Head of caudate nucleus (tissue), 42 donors: ENCODE measurements at regions of chr20 and their contacts with region 1.

Region 1: DNA sequence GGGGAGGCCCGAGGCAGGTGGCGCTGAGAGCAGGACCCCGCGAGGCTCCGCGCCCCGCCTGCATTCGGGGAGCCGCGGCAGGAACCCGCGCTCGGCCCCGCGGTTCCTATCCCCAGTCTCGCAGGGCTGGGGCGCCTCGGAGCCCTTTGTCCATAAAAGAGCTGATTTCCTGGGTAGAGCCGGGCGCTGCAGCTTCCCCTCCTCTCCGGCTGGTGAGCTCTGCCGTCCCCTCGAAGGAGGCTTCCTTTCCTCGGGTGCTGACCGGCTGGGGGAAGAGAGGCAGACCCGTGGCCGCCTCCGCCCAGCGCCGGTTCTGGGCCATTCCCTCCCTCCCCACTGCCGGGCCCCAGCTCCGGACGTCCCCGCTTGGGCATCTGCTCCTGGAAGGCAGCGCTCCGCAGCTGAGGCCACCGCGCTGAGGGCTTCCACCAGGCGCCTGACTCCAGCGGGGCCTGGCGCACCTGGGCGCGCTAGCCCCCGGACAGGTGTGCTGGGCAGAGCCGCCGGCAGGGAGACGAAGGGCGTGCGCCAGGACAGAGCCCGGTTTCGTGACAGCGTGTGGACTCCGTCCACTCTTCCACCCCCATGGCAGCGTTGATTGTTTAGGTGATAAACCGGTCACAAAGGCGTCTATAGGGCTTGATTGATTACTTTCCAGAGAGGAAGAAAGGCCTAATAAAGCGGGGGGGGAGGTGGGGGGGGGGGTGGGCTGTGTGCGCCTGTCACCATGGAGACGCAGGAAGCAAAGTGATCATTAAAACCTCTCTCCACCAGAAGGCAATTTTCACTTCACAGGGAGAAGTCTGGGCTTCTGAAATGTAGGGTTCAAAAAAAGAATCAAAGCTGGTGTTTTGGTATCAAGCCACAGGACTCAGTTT is 1.1 kb downstream of the PHACTR3 start:
- DNase-seq: peak in 33 of 42 donors; percentile 34 to 80 (median 59)

Region 2: DNA sequence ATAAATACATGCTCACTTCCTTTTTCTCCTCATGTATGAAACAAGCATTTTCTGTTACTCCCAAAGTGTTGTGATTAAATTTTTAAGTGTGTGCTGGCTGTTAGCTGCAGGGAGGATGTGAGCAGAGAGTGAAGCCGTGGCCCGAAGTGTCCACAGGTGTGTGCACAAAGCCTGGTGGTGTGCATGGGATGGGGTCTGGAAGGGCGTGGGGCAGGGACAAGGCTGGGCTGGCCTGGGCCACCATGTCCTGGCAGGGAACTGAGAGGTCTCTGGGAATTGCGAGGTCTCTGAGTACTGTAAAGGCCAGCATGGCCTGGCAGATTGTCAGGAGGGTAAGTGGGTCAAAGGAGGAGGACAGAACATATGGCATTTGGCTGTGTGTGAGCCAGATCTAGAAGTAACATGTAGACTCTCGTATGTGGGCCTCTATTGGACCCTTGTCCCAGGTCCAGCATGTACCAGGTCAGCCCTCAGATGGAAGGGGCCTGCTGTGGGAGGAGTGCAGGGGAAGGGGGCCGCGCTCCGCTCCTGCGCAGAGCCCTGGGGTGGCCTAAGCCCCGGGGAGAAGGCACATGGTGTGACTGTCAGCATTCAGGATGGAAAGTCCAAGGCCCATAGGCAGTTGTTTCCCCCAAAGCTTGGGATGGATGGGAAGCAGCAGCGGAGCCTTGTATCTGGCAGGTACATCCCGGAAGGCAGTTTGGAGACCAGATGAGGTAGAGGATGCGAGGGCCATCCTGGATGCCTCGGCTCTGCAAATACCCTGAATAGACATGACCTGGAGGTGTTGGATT is 46.2 kb before region 1 on chr20:
- intact Hi-C with region 1: no loop called
- DNase-seq: no peak

Region 3: GRCh38 chr20:59645761-59646171 is 40.4 kb after region 1 on chr20:
- intact Hi-C with region 1: loop called (anchors 2 kb)
- DNase-seq: peak in 39 of 42 donors; percentile 42 to 87 (median 69)